Colonic mucosa (tissue), 4 donors: ENCODE measurements at regions of chr18 and their contacts with region 1.

Region 1: GRCh38 chr18:20988726-20989125 is 122.9 kb downstream of the ROCK1 start:
- DNase-seq: no peak
- H3K4me3 ChIP-seq: no peak overlapping the region
- H3K27ac ChIP-seq: no peak overlapping the region
- H3K4me1 ChIP-seq: no peaks in the 10 kb centered on the region
- H3K27me3 ChIP-seq: no peaks in the 10 kb centered on the region
- CTCF ChIP-seq: no peak

Region 2: GRCh38 chr18:21111341-21112139 is 122.8 kb after region 1 on chr18 and contains the start of gene ROCK1:
- intact Hi-C with region 1: loop called (anchors 10 kb)
- DNase-seq: peak; percentile 99
- H3K4me3 ChIP-seq: peak within 1 kb of the TSS; percentile 94
- H3K27ac ChIP-seq: peak within 1 kb of the TSS; percentile 97
- H3K4me1 ChIP-seq: no peaks in the 10 kb centered on the region
- H3K27me3 ChIP-seq: no peaks in the 10 kb centered on the region
- CTCF ChIP-seq: no peak
- total RNA-seq, gene ROCK1: 28.9 to 39.5 TPM